K562 (cell line): ENCODE measurements at regions of chr22 and their contacts with region 1.

Region 1: DNA sequence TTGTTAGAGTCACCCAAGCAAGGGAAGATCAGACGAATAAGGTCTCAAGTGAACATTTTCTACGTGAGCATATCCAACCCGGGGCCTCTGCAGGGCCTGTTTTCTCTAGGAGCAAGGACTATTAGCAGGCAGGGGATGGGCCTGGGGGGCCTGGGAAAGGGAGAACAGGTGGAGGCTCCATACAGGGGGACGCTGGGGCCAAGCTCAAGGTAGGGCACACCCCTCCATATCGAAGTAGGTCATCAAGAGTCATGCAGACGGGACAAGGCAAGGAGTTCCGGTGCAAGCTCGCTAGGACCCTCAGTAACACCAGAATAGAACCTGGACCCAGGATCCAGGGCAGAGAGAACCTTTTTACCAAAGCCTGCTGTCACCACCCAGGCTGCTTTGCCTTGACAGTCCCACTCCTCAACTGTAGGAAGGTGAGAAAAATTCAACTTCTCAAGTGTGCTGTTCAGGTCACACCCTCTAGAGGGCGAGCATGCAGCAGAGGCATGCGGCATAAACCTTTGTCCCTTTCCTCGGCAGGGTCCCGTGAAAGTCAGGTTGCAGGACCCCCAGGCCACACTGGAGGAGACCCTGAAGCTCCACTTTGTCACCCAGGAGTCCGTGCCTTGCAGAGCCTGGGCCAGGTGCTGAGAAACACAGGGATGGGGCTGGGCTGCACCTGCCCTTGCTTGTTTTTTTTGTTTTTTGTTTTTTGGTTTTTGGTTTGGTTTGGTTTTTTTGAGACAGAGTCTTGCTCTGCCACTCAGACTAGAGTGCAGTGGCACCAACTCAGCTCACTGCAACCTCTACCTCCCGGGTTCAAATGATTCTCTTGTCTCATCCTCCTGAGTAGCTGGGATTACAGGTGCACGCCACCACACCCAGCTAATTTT is 8.6 kb upstream of the APOBEC3B start:
- DNase-seq: peak; percentile 43 to 61 (median 50)
- ATAC-seq: peak; percentile 83
- H3K4me3 ChIP-seq: no peak overlapping the region
- H3K27ac ChIP-seq: no peak overlapping the region
- H3K4me1 ChIP-seq: no peaks in the 10 kb centered on the region; a peak in 1 of 5 replicates
- H3K27me3 ChIP-seq: peaks cover 0 to 20% of the 10 kb centered on the region in 2 experiments; a peak in 3 of 5 replicates
- CTCF ChIP-seq: peak; percentile 71 to 78 (median 74)
- EP300 ChIP-seq: no peak
- POLR2A ChIP-seq: no peak
- RAD21 ChIP-seq: peak; percentile 25 to 65

Region 2: DNA sequence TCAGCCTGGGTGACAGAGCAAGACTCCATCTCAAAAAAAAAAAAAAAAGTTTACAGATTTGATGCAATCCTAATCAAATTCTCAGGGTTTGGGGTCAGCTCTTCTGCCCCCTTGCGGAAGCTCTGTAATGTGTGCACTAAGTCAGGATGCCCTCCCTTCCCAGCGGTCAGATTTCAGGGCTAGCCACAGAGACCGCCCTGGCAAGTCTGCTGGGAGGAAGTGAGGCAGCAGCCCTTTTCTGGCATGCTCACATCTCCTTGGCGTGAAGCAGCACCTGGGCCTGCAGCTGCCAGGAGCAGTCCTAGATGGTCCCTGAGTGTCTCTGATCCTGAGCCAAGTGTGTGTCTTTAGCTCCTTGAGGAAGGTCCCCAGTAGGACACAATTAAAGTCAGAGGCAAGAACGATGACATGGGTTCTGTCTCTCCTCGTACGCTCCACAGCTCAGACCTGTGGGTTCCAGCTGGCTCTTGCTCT is 29.7 kb after region 1 on chr22:
- CTCF ChIA-PET with region 1: interaction called, 4 read pairs
- POLR2A ChIA-PET with region 1: no interaction called
- in situ Hi-C with region 1: no loop called
- intact Hi-C with region 1: loop called (anchors 1 kb)
- DNase-seq: peak; percentile 61 to 72 (median 64)
- ATAC-seq: peak; percentile 95
- H3K4me3 ChIP-seq: no peak overlapping the region
- H3K27ac ChIP-seq: no peak overlapping the region
- H3K4me1 ChIP-seq: no peaks in the 10 kb centered on the region; a peak in 1 of 5 replicates
- H3K27me3 ChIP-seq: peaks cover 0 to 9% of the 10 kb centered on the region in 2 experiments; a peak in 1 of 5 replicates
- CTCF ChIP-seq: peak; percentile 67 to 74 (median 70)
- EP300 ChIP-seq: no peak
- POLR2A ChIP-seq: no peak
- RAD21 ChIP-seq: peak; percentile 36 to 71

Region 3: DNA sequence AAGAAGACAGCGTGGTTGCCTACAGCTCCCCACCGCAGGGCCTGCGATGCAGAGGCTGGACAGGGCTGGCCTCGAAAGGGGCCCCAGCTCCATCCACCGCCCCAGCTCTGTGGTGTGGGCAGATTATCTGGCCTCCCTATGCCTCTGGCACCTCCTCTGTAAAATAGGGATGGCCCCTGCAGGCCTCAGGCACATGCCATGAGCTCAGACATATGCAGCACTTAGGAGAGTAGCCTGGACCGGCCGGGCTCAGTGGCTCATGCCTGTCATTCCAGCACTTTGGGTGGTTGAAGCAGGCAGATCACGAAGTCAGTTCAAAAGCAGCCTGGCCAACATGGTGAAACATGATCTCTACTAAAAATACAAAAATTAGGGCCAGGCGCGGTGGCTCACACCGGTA is 54.8 kb after region 1 on chr22:
- CTCF ChIA-PET with region 1: no interaction called
- POLR2A ChIA-PET with region 1: no interaction called
- in situ Hi-C with region 1: no loop called
- intact Hi-C with region 1: no loop called
- DNase-seq: no peak
- ATAC-seq: no peak
- H3K4me3 ChIP-seq: no peak overlapping the region
- H3K27ac ChIP-seq: no peak overlapping the region
- H3K4me1 ChIP-seq: peaks cover 3 to 15% of the 10 kb centered on the region in 2 experiments; a peak in 3 of 5 replicates
- H3K27me3 ChIP-seq: no peaks in the 10 kb centered on the region
- CTCF ChIP-seq: no peak
- EP300 ChIP-seq: no peak
- POLR2A ChIP-seq: no peak
- RAD21 ChIP-seq: no peak